ENCODE measurements at regions of chr10 and their contacts with region 1.

Region 1: DNA sequence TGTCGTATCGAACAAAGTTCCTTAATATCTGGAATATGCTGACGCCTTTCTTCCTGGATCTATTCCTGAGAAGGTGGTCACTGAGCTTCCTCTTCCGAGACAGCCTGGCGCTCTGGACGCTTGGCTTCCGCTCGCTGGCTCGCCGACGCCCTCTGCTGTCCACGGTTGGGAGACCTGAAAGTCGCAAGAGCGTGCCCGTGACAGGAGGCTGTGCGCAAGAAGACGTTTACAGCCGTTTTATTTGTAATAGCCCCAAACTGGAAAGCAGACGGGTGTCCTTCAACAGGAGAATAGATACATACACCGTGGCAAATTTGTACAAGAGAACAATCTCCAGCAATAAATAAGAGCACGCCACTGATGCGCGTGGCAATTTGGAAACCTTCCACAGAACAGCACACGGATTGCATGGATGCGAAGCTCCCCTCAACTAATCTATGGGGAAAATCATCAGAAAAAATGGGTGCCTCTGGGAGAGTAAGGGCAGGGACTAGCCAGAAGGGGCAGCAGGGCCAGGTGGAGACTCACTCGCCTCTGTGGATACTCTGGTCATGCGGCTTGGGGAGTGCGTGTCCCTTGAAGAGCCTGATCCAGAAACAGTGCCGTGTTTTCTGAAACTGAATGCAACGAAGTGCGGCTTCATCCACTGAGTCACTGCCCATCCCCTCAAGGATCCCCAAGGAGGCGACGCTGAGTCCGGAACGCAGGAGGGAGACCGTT is 41.5 kb upstream of the BNIP3 start:
- DNase-seq: peak; percentile 83 to 85
- ATAC-seq: peak; percentile 87 to 95
- H3K4me3 ChIP-seq: peak overlapping the region; percentile 39
- H3K27ac ChIP-seq: peak overlapping the region; percentile 31 to 49; a peak in 5 of 6 replicates
- H3K4me1 ChIP-seq: peaks cover 5% of the 10 kb centered on the region; the same call in 1 of the 3 replicates
- CTCF ChIP-seq: peak; percentile 92
- EP300 ChIP-seq: no peak
- POLR2A ChIP-seq: no peak
- RAD21 ChIP-seq: peak; percentile 89 to 92

Region 2: DNA sequence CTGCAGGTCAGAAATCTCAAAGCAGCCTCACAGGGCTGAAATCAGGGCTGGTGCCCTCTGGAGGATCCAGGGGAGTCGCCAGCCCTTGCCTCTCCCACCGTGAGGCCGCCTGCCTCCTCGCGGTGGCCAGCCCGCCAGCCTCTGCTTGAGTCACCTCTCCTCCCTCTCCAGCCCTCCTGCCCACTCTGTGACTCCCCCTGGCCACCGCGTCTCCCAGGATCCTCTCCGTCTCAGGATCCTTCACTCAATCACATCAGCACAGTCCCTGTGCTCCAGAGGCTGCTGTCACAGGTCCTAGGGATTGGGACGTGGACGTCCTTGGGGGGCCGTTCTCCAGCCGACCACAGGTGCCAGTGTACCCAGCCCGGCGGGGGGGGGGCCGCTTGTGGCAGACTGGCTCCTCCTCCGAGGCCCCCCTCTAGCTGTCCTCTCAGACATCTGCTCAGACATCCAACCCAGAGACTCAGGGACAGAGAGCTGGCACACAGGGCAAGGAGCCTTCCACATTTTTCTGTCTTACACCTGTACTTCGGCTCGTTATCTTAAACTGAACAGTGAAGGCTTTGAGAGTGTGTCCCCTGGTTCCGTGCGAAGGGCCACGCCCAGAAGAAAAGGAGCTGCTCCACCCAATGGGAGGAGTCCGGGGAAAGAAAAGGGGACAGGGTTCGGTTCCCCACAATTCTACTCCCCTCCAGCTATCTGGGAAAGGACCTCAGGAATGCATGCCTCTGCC is 131.9 kb before region 1 on chr10:
- CTCF ChIA-PET with region 1: interaction called, 63 read pairs
- POLR2A ChIA-PET with region 1: no interaction called
- DNase-seq: peak; percentile 46 to 66
- ATAC-seq: peak; percentile 96 to 98
- H3K4me3 ChIP-seq: no peak overlapping the region
- H3K27ac ChIP-seq: 0 out of 6 replicates have a peak overlapping the region, but pooled peaks of 1 of the 2 experiments have one; percentile 29
- H3K4me1 ChIP-seq: peaks cover 9% of the 10 kb centered on the region; the same call in 1 of the 3 replicates
- CTCF ChIP-seq: 0 out of 3 replicates have a peak, but pooled peaks have one; percentile 18
- EP300 ChIP-seq: no peak
- POLR2A ChIP-seq: no peak
- RAD21 ChIP-seq: no peak

Region 3: DNA sequence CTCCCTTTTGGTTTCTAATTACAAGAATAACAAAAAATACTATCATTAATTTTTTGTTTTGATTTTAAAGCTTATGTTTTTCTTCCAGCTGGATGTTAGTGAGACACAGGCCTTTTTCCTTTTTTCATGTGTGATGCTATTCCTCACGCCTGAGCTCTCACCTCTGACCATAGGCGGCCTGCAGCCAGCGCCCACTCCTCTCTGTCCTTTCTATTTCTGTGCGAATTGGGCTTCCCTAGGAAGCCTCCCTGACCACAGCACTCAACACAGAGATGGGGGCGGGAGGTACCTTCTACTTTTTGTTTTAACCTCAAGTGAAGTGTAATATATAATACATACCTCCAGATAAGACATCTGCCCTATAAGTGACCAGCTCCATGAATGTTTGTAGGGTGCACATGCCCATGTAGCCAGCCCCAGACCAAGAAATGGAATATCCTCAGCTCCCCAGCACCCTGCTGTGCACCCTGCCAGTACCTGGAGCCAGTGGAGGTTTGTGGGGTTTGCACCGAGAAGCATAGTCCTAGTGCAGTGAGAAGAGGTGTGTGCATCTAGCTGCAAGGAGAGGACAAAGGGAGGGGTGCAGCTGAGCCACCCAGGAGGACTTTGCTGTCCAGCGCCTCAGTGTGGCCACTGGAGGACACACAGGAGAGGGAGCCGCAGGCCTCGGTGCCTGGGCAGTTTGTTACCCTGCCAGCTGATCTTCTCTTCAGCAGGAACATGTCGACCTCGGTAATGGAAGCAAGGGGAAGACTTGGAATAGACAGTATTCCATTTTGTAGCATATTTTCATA is 80.0 kb before region 1 on chr10:
- CTCF ChIA-PET with region 1: interaction called, 59 read pairs
- POLR2A ChIA-PET with region 1: no interaction called
- DNase-seq: peak; percentile 52 to 59
- ATAC-seq: peak; percentile 63 to 90; a peak in 5 of 6 replicates
- H3K4me3 ChIP-seq: no peak overlapping the region
- H3K27ac ChIP-seq: no peak overlapping the region
- H3K4me1 ChIP-seq: peaks cover 31% of the 10 kb centered on the region
- CTCF ChIP-seq: peak; percentile 39; the same call in 2 of the 3 replicates
- EP300 ChIP-seq: no peak
- POLR2A ChIP-seq: no peak
- RAD21 ChIP-seq: peak; percentile 20 to 22; a peak in 1 of 5 replicates

Region 4: GRCh38 chr10:131997366-131998049 is 25.7 kb before region 1 on chr10:
- CTCF ChIA-PET with region 1: interaction called, 104 read pairs
- POLR2A ChIA-PET with region 1: no interaction called
- DNase-seq: peak; percentile 28 to 66
- ATAC-seq: peak; percentile 76 to 77
- H3K4me3 ChIP-seq: no peak overlapping the region
- H3K27ac ChIP-seq: peak overlapping the region; percentile 59 to 64
- H3K4me1 ChIP-seq: peaks cover 21% of the 10 kb centered on the region
- CTCF ChIP-seq: no peak
- EP300 ChIP-seq: no peak
- POLR2A ChIP-seq: no peak
- RAD21 ChIP-seq: no peak

Region 5: GRCh38 chr10:132041340-132041739 is 18.1 kb after region 1 on chr10:
- CTCF ChIA-PET with region 1: interaction called, 24 read pairs
- POLR2A ChIA-PET with region 1: no interaction called
- DNase-seq: no peak
- ATAC-seq: no peak
- H3K4me3 ChIP-seq: no peak overlapping the region
- H3K27ac ChIP-seq: no peak overlapping the region
- H3K4me1 ChIP-seq: 0 out of 3 replicates have a peak, but pooled peaks cover 3% of the 10 kb centered on the region
- CTCF ChIP-seq: no peak
- EP300 ChIP-seq: no peak
- POLR2A ChIP-seq: no peak
- RAD21 ChIP-seq: no peak

Region 6: GRCh38 chr10:132142411-132143161 is 119.3 kb after region 1 on chr10:
- CTCF ChIA-PET with region 1: interaction called, 33 read pairs
- POLR2A ChIA-PET with region 1: no interaction called
- DNase-seq: peak; percentile 33 to 85
- ATAC-seq: peak; percentile 65 to 92
- H3K4me3 ChIP-seq: no peak overlapping the region
- H3K27ac ChIP-seq: peak overlapping the region in 1 of 2 experiments; percentile 50; a peak in 2 of 6 replicates
- H3K4me1 ChIP-seq: no peaks in the 10 kb centered on the region
- CTCF ChIP-seq: peak; percentile 82
- EP300 ChIP-seq: no peak
- POLR2A ChIP-seq: no peak
- RAD21 ChIP-seq: peak; percentile 83 to 96

Measured in A549 (cell line).